ENCODE measurements at regions of chr15 and their contacts with region 1.

Region 1: DNA sequence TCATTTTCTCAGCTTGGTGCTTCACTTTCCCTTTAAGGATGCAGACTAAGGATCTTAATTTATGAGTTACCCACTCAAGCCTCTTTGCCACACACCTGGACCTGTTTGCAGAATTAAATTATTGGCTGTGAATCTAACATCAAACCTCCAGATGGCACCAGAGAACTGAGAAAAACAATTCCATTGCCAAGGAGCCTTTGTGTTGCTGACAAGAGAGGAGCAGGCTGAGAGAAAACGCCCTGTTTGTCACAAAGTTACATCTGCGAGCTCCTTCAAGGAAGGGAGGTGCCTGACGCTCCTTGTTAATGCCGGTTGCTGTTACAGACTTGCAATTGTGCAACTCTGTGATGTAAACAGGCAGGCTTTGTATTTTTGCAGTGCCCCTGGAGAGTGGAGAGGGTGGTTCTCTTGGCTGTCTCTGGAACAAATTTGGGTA is 36.3 kb upstream of the TMC3 start:
- DNase-seq: peak; percentile 74
- H3K4me3 ChIP-seq: no peak overlapping the region
- H3K27ac ChIP-seq: no peak overlapping the region
- H3K4me1 ChIP-seq: no peaks in the 10 kb centered on the region
- H3K27me3 ChIP-seq: peaks cover 0 to 2% of the 10 kb centered on the region in 2 experiments
- CTCF ChIP-seq: peak; percentile 28 to 32
- POLR2A ChIP-seq: no peak

Region 2: GRCh38 chr15:81604713-81605112 is 194.4 kb after region 1 on chr15:
- CTCF ChIA-PET with region 1: no interaction called
- POLR2A ChIA-PET with region 1: no interaction called
- dilution Hi-C with region 1: no loop called
- intact Hi-C with region 1: no loop called
- DNase-seq: no peak
- H3K4me3 ChIP-seq: no peak overlapping the region
- H3K27ac ChIP-seq: no peak overlapping the region
- H3K4me1 ChIP-seq: no peaks in the 10 kb centered on the region
- H3K27me3 ChIP-seq: no peaks in the 10 kb centered on the region
- CTCF ChIP-seq: no peak
- POLR2A ChIP-seq: no peak

Region 3: GRCh38 chr15:81939604-81940440 is 529.5 kb after region 1 on chr15:
- CTCF ChIA-PET with region 1: interaction called, 29 read pairs
- POLR2A ChIA-PET with region 1: no interaction called
- dilution Hi-C with region 1: no loop called
- intact Hi-C with region 1: loop called (anchors 1 kb)
- DNase-seq: peak; percentile 65
- H3K4me3 ChIP-seq: no peak overlapping the region
- H3K27ac ChIP-seq: no peak overlapping the region
- H3K4me1 ChIP-seq: no peaks in the 10 kb centered on the region
- H3K27me3 ChIP-seq: peaks cover 1 to 3% of the 10 kb centered on the region in 2 experiments
- CTCF ChIP-seq: peak; percentile 50 to 61
- POLR2A ChIP-seq: no peak

Region 4: GRCh38 chr15:82197733-82198594 is 787.6 kb after region 1 on chr15:
- CTCF ChIA-PET with region 1: interaction called, 8 read pairs
- POLR2A ChIA-PET with region 1: no interaction called
- dilution Hi-C with region 1: no loop called
- intact Hi-C with region 1: loop called (anchors 1 kb)
- DNase-seq: peak; percentile 74
- H3K4me3 ChIP-seq: no peak overlapping the region
- H3K27ac ChIP-seq: no peak overlapping the region
- H3K4me1 ChIP-seq: no peaks in the 10 kb centered on the region
- H3K27me3 ChIP-seq: no peaks in the 10 kb centered on the region
- CTCF ChIP-seq: peak; percentile 75 to 81
- POLR2A ChIP-seq: no peak